GM18951 (cell line): ENCODE measurements at regions of chr19 and their contacts with region 1.

Region 1: GRCh38 chr19:12567951-12568350 is 16.7 kb upstream of the ZNF564 start:
- POLR2A ChIP-seq: no peak

Region 2: DNA sequence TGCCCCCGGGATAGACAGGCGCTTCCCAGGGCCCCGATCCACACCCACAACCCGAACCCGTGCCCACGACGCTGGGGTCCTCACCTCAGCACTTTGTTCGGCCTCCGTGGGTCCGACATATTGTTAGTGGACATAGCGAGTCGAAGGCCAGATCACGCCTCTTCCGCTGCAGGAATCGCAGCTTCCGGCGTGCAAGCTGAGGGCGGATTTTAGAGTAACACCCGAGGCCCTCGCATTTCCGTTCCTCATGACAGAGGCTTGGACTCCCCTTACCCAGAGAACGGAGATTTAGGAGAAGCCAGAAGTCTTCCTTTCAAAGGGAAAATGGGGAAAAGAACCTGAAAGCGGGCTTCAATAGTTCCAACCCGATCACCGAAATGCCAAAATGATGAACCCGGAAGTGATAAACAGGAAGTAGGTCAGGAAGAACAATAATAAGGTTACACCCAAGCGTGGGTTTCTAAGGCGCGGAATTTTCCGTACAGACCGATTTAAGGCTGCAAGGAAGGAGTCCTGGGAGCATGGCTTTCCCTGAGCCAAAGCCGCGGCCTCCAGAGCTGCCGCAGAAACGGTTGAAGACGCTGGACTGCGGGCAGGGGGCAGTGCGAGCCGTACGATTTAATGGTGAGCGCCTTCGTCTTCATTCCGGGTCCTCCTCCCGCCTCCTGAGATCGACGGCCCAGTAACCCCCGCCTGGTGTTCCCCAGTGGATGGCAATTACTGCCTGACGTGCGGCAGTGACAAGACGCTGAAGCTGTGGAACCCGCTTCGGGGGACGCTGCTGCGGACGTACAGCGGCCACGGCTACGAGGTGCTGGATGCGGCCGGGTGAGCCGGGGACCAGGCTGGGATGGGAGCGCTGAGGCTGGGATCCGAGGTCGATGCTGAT is 101.6 kb after region 1 on chr19:
- in situ Hi-C with region 1: loop called (anchors 5 kb)
- POLR2A ChIP-seq: peak; percentile 62